Gastrocnemius medialis (tissue), 4 donors: ENCODE measurements at regions of chr9 and their contacts with region 1.

Region 1: DNA sequence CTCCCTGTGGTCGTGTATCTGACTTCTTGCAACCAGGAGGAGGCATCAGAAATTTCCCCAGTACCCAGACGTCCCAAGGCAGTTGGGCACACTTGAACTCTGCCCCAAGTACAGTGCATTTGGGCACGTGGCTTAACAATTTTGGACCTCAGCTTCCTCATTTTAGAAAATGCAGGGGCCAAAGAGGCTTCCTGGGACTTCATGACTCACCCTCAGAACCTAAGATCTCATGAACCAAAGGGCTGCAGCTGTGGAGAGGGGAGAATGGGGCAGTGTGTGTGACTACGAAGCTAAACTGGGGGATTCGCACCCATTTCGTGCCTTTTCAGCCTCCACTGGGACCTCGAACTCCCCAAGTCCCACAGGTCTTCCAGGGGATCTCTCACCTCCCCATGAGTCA is 59.2 kb downstream of the SYK start:
- DNase-seq: no peak
- ATAC-seq: no peak
- H3K4me3 ChIP-seq: no peak overlapping the region
- H3K27ac ChIP-seq: no peak overlapping the region
- H3K4me1 ChIP-seq: no peaks in the 10 kb centered on the region
- H3K27me3 ChIP-seq: no peaks in the 10 kb centered on the region
- CTCF ChIP-seq: no peak
- POLR2A ChIP-seq: no peak

Region 2: GRCh38 chr9:89576404-89576839 is 1284.4 kb before region 1 on chr9:
- in situ Hi-C with region 1: loop called in 1 of 4 experiments (anchors 10 kb)
- intact Hi-C with region 1: no loop called
- DNase-seq: no peak
- ATAC-seq: no peak
- H3K4me3 ChIP-seq: no peak overlapping the region
- H3K27ac ChIP-seq: no peak overlapping the region
- H3K4me1 ChIP-seq: no peaks in the 10 kb centered on the region
- H3K27me3 ChIP-seq: peaks cover 0 to 2% (median 0%) of the 10 kb centered on the region in 3 donors
- CTCF ChIP-seq: peak; percentile 63 to 77 (median 70)
- POLR2A ChIP-seq: no peak

Region 3: GRCh38 chr9:90142580-90142979 is 718.2 kb before region 1 on chr9:
- in situ Hi-C with region 1: loop called in 3 of 4 experiments (anchors 10 kb)
- intact Hi-C with region 1: no loop called
- DNase-seq: no peak
- ATAC-seq: no peak
- H3K4me3 ChIP-seq: no peak overlapping the region
- H3K27ac ChIP-seq: no peak overlapping the region
- H3K4me1 ChIP-seq: peaks cover 6 to 7% of the 10 kb centered on the region in 2 donors
- H3K27me3 ChIP-seq: no peaks in the 10 kb centered on the region
- CTCF ChIP-seq: peak in 4 of 5 experiments; percentile 29 to 72 (median 48)
- POLR2A ChIP-seq: no peak

Region 4: GRCh38 chr9:90770182-90770738 is 90.6 kb before region 1 on chr9:
- in situ Hi-C with region 1: no loop called
- intact Hi-C with region 1: no loop called
- DNase-seq: no peak
- ATAC-seq: no peak
- H3K4me3 ChIP-seq: no peak overlapping the region
- H3K27ac ChIP-seq: no peak overlapping the region
- H3K4me1 ChIP-seq: no peaks in the 10 kb centered on the region
- H3K27me3 ChIP-seq: no peaks in the 10 kb centered on the region
- CTCF ChIP-seq: no peak
- POLR2A ChIP-seq: no peak

Region 5: DNA sequence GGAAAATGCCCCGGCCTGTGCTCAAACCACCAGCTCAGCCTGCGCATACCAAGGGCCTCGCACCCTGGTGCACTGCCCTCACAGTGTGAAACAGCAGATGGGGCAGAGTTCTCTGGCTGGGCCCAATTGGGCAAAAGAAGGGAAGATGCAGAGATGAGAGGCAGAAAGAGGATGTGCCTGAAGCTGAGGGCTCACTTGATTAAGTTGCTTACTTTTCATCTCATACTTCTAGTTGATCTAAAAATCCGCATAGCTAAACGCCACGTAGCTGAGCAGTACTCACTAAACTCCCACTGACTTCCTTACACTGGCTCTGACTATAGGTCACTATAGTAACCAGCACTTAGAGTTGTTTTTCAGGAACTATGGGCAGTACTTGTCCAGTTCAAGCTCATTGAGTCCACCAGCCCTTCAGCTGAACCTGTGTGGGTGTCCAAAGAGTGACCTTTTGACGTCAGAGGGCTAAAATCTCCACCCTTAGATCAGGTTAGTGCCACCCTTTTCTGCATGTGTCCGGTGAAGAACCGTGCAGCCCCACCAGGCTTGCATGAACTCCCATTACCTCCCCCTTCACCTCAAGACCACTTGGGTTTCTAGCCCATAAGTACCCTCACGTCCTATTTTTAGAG is 285.7 kb after region 1 on chr9:
- in situ Hi-C with region 1: no loop called
- intact Hi-C with region 1: no loop called
- DNase-seq: no peak
- ATAC-seq: no peak
- H3K4me3 ChIP-seq: no peak overlapping the region
- H3K27ac ChIP-seq: no peak overlapping the region
- H3K4me1 ChIP-seq: no peaks in the 10 kb centered on the region
- H3K27me3 ChIP-seq: no peaks in the 10 kb centered on the region
- CTCF ChIP-seq: no peak
- POLR2A ChIP-seq: no peak

Region 6: GRCh38 chr9:91315191-91315590 is 454.4 kb after region 1 on chr9:
- in situ Hi-C with region 1: no loop called
- intact Hi-C with region 1: no loop called
- DNase-seq: no peak
- ATAC-seq: no peak
- H3K4me3 ChIP-seq: no peak overlapping the region
- H3K27ac ChIP-seq: no peak overlapping the region
- H3K4me1 ChIP-seq: peaks cover 0 to 3% of the 10 kb centered on the region in 2 donors
- H3K27me3 ChIP-seq: no peaks in the 10 kb centered on the region
- CTCF ChIP-seq: no peak
- POLR2A ChIP-seq: no peak